GM23248 (cell line): ENCODE measurements at regions of chr3 and their contacts with region 1.

Region 1: DNA sequence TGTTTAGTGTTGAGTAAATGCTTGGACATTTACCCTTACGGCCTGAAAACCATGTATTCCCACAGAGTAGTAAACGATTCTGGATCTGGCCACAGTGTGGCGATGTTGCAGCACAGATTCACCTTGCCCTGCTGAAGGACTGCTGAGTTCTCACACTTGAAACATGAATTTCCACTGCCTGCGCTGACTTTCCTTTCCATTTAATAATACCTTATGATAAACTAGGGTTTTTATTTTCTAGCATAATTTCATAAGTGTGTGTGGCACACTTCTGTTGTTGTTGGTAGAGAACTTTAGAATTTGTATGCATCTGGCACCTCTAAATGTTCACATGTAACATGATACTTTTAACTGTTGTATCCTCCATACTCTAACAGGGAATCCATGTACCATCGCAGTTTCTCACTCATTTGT is 53.9 kb downstream of the C3orf38 start:
- DNase-seq: peak; percentile 73
- H3K4me3 ChIP-seq: no peak overlapping the region
- H3K27ac ChIP-seq: no peak overlapping the region
- H3K4me1 ChIP-seq: no peaks in the 10 kb centered on the region
- H3K27me3 ChIP-seq: no peaks in the 10 kb centered on the region

Region 2: GRCh38 chr3:88485001-88485400 is 281.4 kb after region 1 on chr3:
- in situ Hi-C with region 1: no loop called
- DNase-seq: no peak
- H3K4me3 ChIP-seq: no peak overlapping the region
- H3K27ac ChIP-seq: no peak overlapping the region
- H3K4me1 ChIP-seq: no peaks in the 10 kb centered on the region
- H3K27me3 ChIP-seq: no peaks in the 10 kb centered on the region

Region 3: GRCh38 chr3:88509582-88509981 is 305.9 kb after region 1 on chr3:
- in situ Hi-C with region 1: no loop called
- DNase-seq: no peak
- H3K4me3 ChIP-seq: no peak overlapping the region
- H3K27ac ChIP-seq: no peak overlapping the region
- H3K4me1 ChIP-seq: no peaks in the 10 kb centered on the region
- H3K27me3 ChIP-seq: no peaks in the 10 kb centered on the region

Region 4: GRCh38 chr3:90091204-90091924 is 1887.7 kb after region 1 on chr3:
- in situ Hi-C with region 1: loop called (anchors 25 kb)
- DNase-seq: peak; percentile 61
- H3K4me3 ChIP-seq: no peak overlapping the region
- H3K27ac ChIP-seq: no peak overlapping the region
- H3K4me1 ChIP-seq: no peaks in the 10 kb centered on the region
- H3K27me3 ChIP-seq: 0 out of 2 replicates have a peak, but pooled peaks cover 3% of the 10 kb centered on the region

Region 5: GRCh38 chr3:90184861-90185260 is 1981.2 kb after region 1 on chr3:
- in situ Hi-C with region 1: loop called (anchors 25 kb)
- DNase-seq: peak; percentile 51
- H3K4me3 ChIP-seq: no peak overlapping the region
- H3K27ac ChIP-seq: no peak overlapping the region
- H3K4me1 ChIP-seq: no peaks in the 10 kb centered on the region; the same call in 1 of the 2 replicates
- H3K27me3 ChIP-seq: no peaks in the 10 kb centered on the region